ENCODE measurements at regions of chr1 and their contacts with region 1.

Region 1: GRCh38 chr1:158203693-158204457 is 23.2 kb downstream of the CD1D start:
- DNase-seq: no peak
- H3K4me3 ChIP-seq: no peak overlapping the region
- H3K27me3 ChIP-seq: no peaks in the 10 kb centered on the region
- CTCF ChIP-seq: peak; percentile 72

Region 2: GRCh38 chr1:158028969-158029368 is 174.9 kb before region 1 on chr1:
- CTCF ChIA-PET with region 1: no interaction called
- POLR2A ChIA-PET with region 1: no interaction called
- DNase-seq: no peak
- H3K4me3 ChIP-seq: no peak overlapping the region
- H3K27me3 ChIP-seq: no peaks in the 10 kb centered on the region
- CTCF ChIP-seq: no peak

Region 3: GRCh38 chr1:158185770-158186705 is 17.8 kb before region 1 on chr1:
- CTCF ChIA-PET with region 1: interaction called, 17 read pairs
- POLR2A ChIA-PET with region 1: no interaction called
- DNase-seq: no peak
- H3K4me3 ChIP-seq: no peak overlapping the region
- H3K27me3 ChIP-seq: peaks cover 24% of the 10 kb centered on the region
- CTCF ChIP-seq: no peak

Region 4: GRCh38 chr1:158998781-158999161 is 794.9 kb after region 1 on chr1:
- CTCF ChIA-PET with region 1: interaction called, 30 read pairs
- POLR2A ChIA-PET with region 1: no interaction called
- DNase-seq: peak; percentile 35
- H3K4me3 ChIP-seq: peak overlapping the region; percentile 50
- H3K27me3 ChIP-seq: 0 out of 2 replicates have a peak, but pooled peaks cover 2% of the 10 kb centered on the region
- CTCF ChIP-seq: peak; percentile 76

Region 5: DNA sequence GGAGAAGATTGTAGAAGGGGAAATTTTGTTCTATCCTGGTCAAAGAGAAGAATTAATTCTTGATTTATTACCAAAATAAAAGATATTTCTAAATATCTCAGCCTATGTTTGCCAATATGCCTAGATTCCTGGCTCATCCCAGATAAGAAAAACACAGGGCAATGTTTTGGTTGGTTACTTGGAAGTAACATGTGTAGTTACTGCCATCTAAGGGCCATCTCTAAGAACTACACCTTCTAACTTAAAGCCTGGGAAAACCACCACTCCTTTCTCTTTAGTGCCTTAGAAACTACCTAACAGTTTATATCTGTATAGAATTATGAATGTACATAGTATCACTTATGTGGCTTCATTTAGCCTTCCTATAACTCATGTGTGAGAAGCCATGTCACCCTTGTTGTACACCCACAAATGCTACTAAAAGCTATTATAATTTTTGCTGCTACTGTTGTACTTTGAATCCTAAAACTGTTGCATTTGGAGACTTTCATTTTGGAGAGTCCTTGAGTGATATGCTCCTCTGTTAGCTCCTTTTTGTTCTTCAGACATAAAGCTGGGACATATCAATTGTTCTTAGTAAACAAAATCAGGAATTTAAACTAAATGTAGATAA is 868.2 kb after region 1 on chr1:
- CTCF ChIA-PET with region 1: interaction called, 36 read pairs
- POLR2A ChIA-PET with region 1: no interaction called
- DNase-seq: no peak
- H3K4me3 ChIP-seq: no peak overlapping the region
- H3K27me3 ChIP-seq: peaks cover 4% of the 10 kb centered on the region; the same call in 1 of the 2 replicates
- CTCF ChIP-seq: peak; percentile 62

Measured in BJ (cell line).